ENCODE measurements at regions of chr10 and their contacts with region 1.

Region 1: DNA sequence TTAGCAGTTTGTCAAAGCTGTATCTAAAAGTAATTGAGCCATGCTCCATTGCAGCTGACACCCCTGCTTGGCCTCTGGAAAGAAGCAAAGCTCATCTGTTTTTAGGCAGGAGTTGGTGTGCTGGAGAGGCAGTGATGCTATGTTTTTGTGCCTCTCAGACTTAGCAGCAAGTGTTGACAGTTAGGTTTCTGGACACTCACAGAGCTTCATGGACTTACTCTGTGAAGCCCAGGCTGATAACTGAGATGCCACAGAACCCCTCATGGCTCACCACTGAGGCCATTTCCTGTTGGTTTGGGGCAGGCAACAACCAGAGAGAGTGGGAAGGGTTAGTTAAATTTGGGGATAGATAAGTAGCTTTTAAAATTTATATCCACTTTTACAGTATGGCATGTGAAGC is 59.8 kb downstream of the BTAF1 start:
- DNase-seq: no peak
- H3K4me3 ChIP-seq: no peak overlapping the region
- H3K27ac ChIP-seq: no peak overlapping the region
- H3K4me1 ChIP-seq: no peaks in the 10 kb centered on the region
- H3K27me3 ChIP-seq: no peaks in the 10 kb centered on the region
- CTCF ChIP-seq: no peak
- EP300 ChIP-seq: no peak
- POLR2A ChIP-seq: no peak

Region 2: DNA sequence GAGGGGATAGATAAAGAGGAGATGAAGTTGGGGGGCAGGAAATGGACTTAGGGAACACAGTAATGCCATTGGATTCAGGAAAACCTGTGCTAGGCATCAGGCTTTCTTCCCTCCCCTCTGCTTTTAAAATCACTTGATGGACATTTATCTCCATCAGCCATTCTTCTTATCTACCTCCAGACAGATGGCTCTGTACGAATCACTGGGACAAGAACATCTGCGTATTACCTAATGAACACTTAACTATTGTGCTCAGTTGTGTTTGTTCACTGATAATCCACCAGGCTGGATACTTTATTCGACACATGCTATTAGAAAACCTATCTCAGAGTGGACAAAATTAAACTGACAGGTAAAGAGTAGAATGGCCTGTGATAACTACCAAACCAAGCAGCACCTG is 145.2 kb before region 1 on chr10:
- intact Hi-C with region 1: loop called (anchors 10 kb)
- DNase-seq: no peak
- H3K4me3 ChIP-seq: no peak overlapping the region
- H3K27ac ChIP-seq: no peak overlapping the region
- H3K4me1 ChIP-seq: no peaks in the 10 kb centered on the region
- H3K27me3 ChIP-seq: no peaks in the 10 kb centered on the region
- CTCF ChIP-seq: no peak
- EP300 ChIP-seq: no peak
- POLR2A ChIP-seq: no peak

Region 3: GRCh38 chr10:92517034-92517655 is 533.7 kb after region 1 on chr10:
- intact Hi-C with region 1: no loop called
- DNase-seq: no peak
- H3K4me3 ChIP-seq: no peak overlapping the region
- H3K27ac ChIP-seq: no peak overlapping the region
- H3K4me1 ChIP-seq: peaks cover 0 to 2% (median 0%) of the 10 kb centered on the region in 4 donors
- H3K27me3 ChIP-seq: no peaks in the 10 kb centered on the region
- CTCF ChIP-seq: peak; percentile 74 to 81 (median 78)
- EP300 ChIP-seq: no peak
- POLR2A ChIP-seq: no peak

Measured in esophagus muscularis mucosa (tissue), 4 donors.